ENCODE measurements at regions of chr10 and their contacts with region 1.

Region 1: GRCh38 chr10:100743626-100744135 is 1.7 kb upstream of the PAX2 start:
- DNase-seq: no peak
- H3K4me3 Mint-ChIP-seq: no peak overlapping the region
- H3K27ac Mint-ChIP-seq: peak overlapping the region; percentile 6
- H3K4me1 Mint-ChIP-seq: peaks cover 9% of the 10 kb centered on the region
- H3K27me3 Mint-ChIP-seq: peaks cover 80% of the 10 kb centered on the region

Region 2: GRCh38 chr10:99532687-99533495 is 1210.8 kb before region 1 on chr10 and contains the start of gene NKX2-3:
- intact Hi-C with region 1: loop called (anchors 5 kb)
- DNase-seq: no peak
- H3K4me3 Mint-ChIP-seq: no peak within 1 kb of the TSS
- H3K27ac Mint-ChIP-seq: no peak within 1 kb of the TSS
- H3K4me1 Mint-ChIP-seq: peaks cover 16% of the 10 kb centered on the region
- H3K27me3 Mint-ChIP-seq: peaks cover 89% of the 10 kb centered on the region
- total RNA-seq, gene NKX2-3: not detected in 2 replicates

Region 3: DNA sequence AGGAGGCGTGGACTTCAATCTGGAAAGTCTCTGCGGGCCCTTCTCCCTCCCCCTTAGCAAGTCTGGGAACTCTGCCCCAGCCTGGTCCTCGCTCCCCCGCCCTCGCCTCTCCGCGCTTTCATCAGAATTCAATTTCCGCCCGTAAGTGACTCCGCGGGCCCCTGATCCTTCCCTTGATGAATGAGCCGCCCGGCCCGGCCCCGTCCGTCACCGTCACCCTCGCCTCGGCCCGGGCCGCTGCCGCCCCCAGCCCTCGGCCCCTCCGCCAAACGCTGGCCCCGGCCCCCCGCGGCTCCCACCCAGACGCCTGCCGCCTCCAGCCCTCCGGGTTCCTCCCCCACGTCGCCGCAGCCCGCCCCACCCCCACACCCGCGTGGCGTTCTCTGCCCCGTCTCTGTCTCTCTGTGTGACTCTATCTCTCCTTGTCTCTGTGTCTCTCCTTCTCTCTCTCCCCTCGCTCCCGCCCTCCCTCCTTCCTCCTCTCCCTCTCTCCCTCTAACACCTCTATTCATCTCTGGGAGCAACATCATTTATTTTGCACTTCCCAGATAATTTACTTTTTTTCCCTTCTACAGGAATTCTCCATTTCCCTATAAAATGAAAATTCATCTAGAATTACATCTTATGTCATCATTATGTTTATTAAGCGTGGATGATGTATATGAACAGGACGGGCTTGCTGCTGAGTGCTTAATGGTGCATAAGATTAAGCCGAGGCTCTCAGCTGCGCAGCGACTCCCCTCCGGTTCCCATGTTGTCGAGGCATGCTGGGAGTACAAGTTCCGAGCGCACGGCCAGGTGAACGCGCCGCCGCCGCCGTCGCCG is 89.5 kb before region 1 on chr10:
- intact Hi-C with region 1: loop called (anchors 5 kb)
- DNase-seq: no peak
- H3K4me3 Mint-ChIP-seq: peak overlapping the region; percentile 73
- H3K27ac Mint-ChIP-seq: no peak overlapping the region
- H3K4me1 Mint-ChIP-seq: peaks cover 24% of the 10 kb centered on the region
- H3K27me3 Mint-ChIP-seq: peaks cover 63% of the 10 kb centered on the region

Region 4: DNA sequence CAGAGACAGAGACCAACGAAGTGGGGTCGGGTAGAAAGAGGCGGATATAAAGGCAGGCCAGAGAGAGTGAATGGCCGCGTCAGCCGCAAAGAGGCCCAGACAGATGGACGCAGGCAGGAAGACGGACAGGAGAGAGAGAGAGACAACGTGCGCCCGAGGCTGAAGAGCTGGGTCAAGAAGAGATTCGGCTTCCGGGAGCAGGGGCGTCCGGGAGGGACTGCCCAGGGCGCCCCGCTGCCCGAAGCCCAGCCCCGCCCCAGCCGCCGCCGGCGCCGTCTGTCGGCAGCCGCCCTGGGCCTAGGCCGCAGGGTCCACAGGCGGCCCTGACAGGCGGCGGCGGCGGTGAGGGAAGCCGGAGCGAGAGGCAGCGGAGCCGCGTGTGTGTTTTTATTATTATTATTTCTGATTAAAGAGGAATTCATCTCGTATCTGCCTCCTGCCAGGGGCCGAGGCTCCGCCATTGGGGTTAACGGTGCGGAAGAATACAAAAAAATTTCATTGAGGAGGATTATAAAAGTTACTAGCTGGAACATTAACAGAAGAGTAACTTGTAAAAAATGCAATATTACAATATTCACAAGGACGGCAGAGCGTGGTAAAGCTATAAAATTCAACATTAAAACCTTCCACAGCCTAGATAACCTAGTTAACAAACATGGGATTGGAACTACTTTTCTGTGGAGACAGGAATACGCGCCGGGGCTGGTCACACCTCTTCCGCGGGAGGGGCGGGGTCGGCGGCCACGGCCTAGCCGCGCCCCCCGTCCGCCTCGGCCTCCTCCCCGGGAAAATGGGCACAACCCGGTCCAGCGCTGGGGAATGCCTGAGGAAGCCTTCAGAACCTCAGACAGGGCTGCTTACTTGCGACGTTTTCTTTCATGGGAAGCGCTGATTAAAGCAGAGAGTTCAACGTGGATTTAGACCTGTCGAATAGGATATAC is 28.0 kb before region 1 on chr10:
- intact Hi-C with region 1: loop called (anchors 2 kb)
- DNase-seq: no peak
- H3K4me3 Mint-ChIP-seq: no peak overlapping the region
- H3K27ac Mint-ChIP-seq: no peak overlapping the region
- H3K4me1 Mint-ChIP-seq: no peaks in the 10 kb centered on the region
- H3K27me3 Mint-ChIP-seq: peaks cover 86% of the 10 kb centered on the region

Region 5: DNA sequence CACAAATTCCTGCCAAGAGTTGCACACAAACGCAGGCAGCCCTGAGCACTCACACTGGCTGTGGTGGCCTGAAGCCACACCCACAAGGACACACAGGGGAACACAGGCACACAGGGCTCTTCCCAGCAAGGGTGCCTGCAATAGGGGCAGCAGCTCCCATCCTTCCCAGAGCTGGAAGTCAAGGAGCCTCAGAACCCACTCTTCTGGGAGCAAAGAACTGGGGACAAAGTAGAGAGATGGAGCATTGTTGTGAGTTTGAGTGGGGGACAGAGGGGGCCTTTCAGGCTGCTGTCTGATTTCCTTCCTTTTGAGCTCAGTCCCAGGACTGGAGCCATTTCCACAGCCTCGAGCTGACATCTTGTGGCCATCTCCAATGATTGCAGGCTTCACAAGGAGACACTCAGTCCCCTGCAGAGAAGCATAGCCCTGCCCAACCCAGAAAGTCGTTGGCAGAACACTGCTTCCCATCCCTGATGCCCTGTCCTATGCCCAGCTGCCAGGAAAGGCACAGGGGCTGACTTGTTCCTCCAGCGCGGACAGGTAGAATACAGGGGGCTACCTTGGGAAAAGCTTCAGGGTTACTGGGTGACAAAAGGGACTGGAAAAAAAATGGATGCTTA is 134.7 kb after region 1 on chr10:
- intact Hi-C with region 1: loop called (anchors 10 kb)
- DNase-seq: peak; percentile 12
- H3K4me3 Mint-ChIP-seq: no peak overlapping the region
- H3K27ac Mint-ChIP-seq: no peak overlapping the region
- H3K4me1 Mint-ChIP-seq: no peaks in the 10 kb centered on the region
- H3K27me3 Mint-ChIP-seq: peaks cover 17% of the 10 kb centered on the region

Region 6: GRCh38 chr10:101222683-101223273 is 479.1 kb after region 1 on chr10:
- intact Hi-C with region 1: loop called (anchors 2 kb)
- DNase-seq: no peak
- H3K4me3 Mint-ChIP-seq: no peak overlapping the region
- H3K27ac Mint-ChIP-seq: no peak overlapping the region
- H3K4me1 Mint-ChIP-seq: peaks cover 9% of the 10 kb centered on the region
- H3K27me3 Mint-ChIP-seq: peaks cover 84% of the 10 kb centered on the region